Activated B cell treated with CpG ODN at 0.5 μM for 24 hours (primary cell): ENCODE measurements at regions of chr7 and their contacts with region 1.

Region 1: GRCh38 chr7:21427182-21427870 is 557 bp upstream of the SP4 start:
- DNase-seq: peak; percentile 99
- ATAC-seq: peak; percentile 75
- H3K4me3 Mint-ChIP-seq: peak overlapping the region; percentile 100
- H3K27ac Mint-ChIP-seq: peak overlapping the region; percentile 100
- H3K4me1 Mint-ChIP-seq: peaks cover 49% of the 10 kb centered on the region
- H3K27me3 Mint-ChIP-seq: no peaks in the 10 kb centered on the region
- CTCF ChIP-seq: no peak

Region 2: DNA sequence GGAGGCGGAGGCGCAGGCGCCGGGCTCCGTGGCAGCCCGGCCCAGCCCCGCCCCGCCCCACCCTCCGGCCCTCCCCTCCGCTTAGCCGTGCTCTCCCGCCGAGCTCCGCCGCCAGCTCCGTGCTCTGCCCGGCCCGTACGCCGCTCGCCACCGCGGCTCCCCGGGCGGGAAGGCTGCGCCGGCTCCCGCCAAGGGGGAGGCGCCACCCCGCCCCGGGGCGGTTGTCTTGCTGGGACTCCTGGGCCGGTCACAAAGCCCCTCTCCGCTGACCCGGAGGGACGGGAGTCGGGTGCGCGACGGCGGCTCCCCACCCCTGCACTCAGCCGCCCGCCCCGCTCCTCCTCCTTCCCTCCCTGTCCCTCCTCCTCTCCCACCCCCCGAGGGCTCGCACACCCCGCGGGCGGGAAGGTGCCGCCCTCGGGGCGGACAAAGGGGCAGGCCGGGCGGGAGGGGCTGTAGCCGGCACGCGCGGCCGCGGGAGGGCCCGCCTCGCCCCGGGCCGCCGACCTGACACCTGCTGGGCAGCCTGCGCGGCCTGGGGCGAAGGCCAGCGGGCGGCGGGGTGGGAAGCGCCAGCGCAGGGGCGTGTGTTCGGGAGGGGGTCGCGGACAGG is 629.1 kb before region 1 on chr7:
- CTCF ChIA-PET with region 1: no interaction called
- POLR2A ChIA-PET with region 1: no interaction called
- intact Hi-C with region 1: loop called (anchors 5 kb)
- DNase-seq: no peak
- ATAC-seq: peak; percentile 82
- H3K4me3 Mint-ChIP-seq: peak overlapping the region; percentile 76
- H3K27ac Mint-ChIP-seq: no peak overlapping the region
- H3K4me1 Mint-ChIP-seq: peaks cover 22% of the 10 kb centered on the region
- H3K27me3 Mint-ChIP-seq: peaks cover 42% of the 10 kb centered on the region
- CTCF ChIP-seq: no peak

Region 3: DNA sequence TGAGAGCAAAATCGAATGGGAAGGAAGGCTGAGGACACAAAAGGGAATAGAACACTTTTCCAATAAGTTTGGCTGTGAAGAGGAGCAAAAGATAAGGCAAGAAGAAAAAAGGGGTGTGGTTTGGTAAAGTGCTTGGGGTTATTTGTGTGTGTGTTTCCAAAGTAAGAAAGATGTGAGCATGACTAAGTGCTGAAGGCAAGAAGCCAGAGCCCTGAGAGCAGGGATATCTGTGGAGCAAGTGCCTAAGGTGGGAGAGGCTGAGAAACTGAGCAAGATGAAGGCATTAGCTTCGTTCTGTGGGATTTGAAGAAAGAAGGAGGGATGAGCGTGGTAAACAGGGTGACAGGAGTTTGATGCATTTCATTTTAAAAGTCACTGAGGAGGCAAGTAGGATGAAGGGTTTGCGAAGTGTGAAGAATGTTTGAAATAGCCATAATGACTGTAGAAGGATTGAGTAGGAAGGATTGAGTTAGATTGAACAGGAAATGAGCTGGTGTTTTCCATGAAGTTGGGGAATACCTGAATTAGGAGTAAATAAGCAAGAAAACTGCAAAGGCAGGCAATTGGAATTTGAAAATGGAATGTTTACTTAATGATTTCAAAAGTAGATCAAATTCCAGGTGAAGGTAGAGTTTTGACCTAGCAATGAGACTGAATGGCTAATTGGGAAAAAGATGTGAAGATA is 19.4 kb before region 1 on chr7:
- CTCF ChIA-PET with region 1: no interaction called
- POLR2A ChIA-PET with region 1: interaction called, 8 read pairs
- intact Hi-C with region 1: loop called (anchors 2 kb)
- DNase-seq: no peak
- ATAC-seq: no peak
- H3K4me3 Mint-ChIP-seq: no peak overlapping the region
- H3K27ac Mint-ChIP-seq: no peak overlapping the region
- H3K4me1 Mint-ChIP-seq: peaks cover 14% of the 10 kb centered on the region
- H3K27me3 Mint-ChIP-seq: no peaks in the 10 kb centered on the region
- CTCF ChIP-seq: no peak

Region 4: GRCh38 chr7:21945454-21946227 is 518.3 kb after region 1 on chr7 and contains the start of gene CDCA7L:
- CTCF ChIA-PET with region 1: no interaction called
- POLR2A ChIA-PET with region 1: interaction called, 18 read pairs
- intact Hi-C with region 1: loop called (anchors 2 kb)
- DNase-seq: peak; percentile 80
- ATAC-seq: peak; percentile 77
- H3K4me3 Mint-ChIP-seq: peak within 1 kb of the TSS; percentile 94
- H3K27ac Mint-ChIP-seq: peak within 1 kb of the TSS; percentile 96
- H3K4me1 Mint-ChIP-seq: peaks cover 70% of the 10 kb centered on the region
- H3K27me3 Mint-ChIP-seq: no peaks in the 10 kb centered on the region
- CTCF ChIP-seq: no peak
- total RNA-seq, gene CDCA7L: 69.8 and 70.3 TPM in 2 replicates

Region 5: DNA sequence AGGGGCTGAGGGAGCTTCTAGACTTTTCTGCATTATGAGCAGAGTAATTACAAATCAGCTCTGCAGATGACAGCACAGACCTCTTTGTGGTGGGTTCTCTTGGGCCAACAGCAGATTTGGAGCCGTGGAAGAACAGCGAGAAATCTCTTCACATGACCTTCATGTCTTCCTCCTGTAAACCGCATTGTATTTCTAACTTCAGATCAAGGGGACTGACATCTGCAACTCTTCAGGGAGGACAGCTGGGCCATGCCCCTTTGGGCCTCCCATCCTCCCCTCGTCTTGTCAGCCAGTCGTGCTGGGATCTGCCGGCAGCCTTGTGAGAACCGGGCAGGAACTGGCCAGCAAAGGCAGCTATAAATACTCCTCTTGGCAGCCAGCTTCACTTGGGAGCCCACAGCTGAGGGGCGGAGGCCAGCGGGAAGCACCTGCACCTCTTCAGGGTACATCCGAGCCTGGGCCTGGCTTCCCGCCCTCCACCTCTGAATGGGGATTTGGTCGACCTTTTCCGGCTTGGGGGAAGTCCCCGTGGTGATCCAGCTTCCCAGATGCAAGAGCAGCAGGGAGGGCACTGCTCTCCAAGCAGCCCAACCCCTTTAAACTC is 1017.9 kb after region 1 on chr7:
- CTCF ChIA-PET with region 1: no interaction called
- POLR2A ChIA-PET with region 1: no interaction called
- intact Hi-C with region 1: loop called (anchors 5 kb)
- DNase-seq: no peak
- ATAC-seq: peak; percentile 26
- H3K4me3 Mint-ChIP-seq: peak overlapping the region; percentile 60
- H3K27ac Mint-ChIP-seq: peak overlapping the region; percentile 87
- H3K4me1 Mint-ChIP-seq: peaks cover 69% of the 10 kb centered on the region
- H3K27me3 Mint-ChIP-seq: no peaks in the 10 kb centered on the region
- CTCF ChIP-seq: no peak

Region 6: GRCh38 chr7:23181684-23182553 is 1754.6 kb after region 1 on chr7 and contains the start of gene NUP42:
- CTCF ChIA-PET with region 1: no interaction called
- POLR2A ChIA-PET with region 1: interaction called, 5 read pairs
- intact Hi-C with region 1: loop called (anchors 5 kb)
- DNase-seq: peak; percentile 90
- ATAC-seq: peak; percentile 90
- H3K4me3 Mint-ChIP-seq: peak within 1 kb of the TSS; percentile 94
- H3K27ac Mint-ChIP-seq: peak within 1 kb of the TSS; percentile 100
- H3K4me1 Mint-ChIP-seq: peaks cover 28% of the 10 kb centered on the region
- H3K27me3 Mint-ChIP-seq: no peaks in the 10 kb centered on the region
- CTCF ChIP-seq: no peak
- total RNA-seq, gene NUP42: 39.2 and 50.6 TPM in 2 replicates